ENCODE measurements at regions of chr18 and their contacts with region 1.

Region 1: DNA sequence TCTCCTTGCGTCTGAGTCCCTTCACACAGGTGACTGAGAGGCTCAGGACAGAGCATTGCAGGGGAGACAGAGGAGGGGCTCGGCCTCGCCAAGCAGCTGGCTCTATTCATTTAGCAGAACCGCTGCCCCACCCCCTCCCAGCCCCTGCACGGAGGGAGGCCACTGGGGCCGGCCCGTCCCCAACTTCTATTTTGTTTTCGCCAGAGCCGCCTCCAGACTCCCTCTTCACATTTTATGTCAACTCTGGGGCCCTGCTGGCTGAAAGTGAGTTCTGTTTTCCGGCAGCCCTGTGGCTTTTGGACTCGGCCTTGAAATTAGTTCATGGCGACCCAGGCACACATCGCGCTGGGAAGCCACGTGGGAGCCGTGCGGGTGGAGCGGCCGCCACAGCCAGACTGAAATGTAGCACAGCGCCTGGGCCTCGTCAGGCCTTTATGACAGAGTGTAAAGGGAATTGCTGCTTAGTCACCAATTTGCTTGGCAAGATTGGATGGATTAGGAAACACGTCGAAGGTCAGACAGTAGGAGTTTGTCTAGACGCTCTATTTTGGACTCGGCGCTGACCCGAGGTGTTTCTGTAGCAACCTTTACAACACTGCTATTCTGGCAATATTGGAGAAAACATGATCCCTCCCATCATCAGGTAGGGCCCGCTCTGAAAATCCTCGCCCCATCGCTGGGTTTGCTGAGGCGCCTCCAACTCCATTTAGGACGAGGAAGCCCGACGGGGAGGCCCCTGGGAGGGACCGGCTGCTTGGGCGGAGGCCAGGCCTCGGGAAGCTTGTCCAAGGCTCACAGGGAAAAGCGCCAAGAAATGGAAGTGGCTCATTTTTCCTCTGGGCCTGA is 90.7 kb upstream of the CTDP1 start:
- DNase-seq: peak; percentile 96 to 97
- ATAC-seq: peak; percentile 93
- H3K4me3 ChIP-seq: no peak overlapping the region
- H3K27ac ChIP-seq: peak overlapping the region; percentile 87 to 98
- H3K4me1 ChIP-seq: no peaks in the 10 kb centered on the region
- H3K27me3 ChIP-seq: no peaks in the 10 kb centered on the region

Region 2: DNA sequence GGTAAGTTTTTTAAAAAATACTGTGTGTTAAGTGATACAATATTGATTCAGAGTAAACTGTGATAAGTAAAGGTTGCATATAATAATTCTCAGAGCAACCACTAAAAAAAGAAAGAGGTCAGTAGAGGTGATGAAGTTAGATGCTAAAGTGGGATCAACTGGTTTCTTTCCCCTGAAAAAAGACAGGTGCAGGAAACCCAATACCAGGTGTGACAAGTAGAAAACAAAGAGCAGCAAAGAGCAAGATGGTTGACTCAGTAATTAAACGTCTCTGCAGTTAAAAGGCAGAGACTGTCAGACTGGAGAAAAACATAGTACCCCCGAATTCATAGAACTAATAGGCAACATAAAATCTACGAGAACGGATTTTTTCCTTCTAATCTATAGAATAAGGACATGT is 391.3 kb before region 1 on chr18:
- intact Hi-C with region 1: no loop called
- DNase-seq: no peak
- ATAC-seq: no peak
- H3K4me3 ChIP-seq: no peak overlapping the region
- H3K27ac ChIP-seq: no peak overlapping the region
- H3K4me1 ChIP-seq: no peaks in the 10 kb centered on the region
- H3K27me3 ChIP-seq: no peaks in the 10 kb centered on the region

Region 3: DNA sequence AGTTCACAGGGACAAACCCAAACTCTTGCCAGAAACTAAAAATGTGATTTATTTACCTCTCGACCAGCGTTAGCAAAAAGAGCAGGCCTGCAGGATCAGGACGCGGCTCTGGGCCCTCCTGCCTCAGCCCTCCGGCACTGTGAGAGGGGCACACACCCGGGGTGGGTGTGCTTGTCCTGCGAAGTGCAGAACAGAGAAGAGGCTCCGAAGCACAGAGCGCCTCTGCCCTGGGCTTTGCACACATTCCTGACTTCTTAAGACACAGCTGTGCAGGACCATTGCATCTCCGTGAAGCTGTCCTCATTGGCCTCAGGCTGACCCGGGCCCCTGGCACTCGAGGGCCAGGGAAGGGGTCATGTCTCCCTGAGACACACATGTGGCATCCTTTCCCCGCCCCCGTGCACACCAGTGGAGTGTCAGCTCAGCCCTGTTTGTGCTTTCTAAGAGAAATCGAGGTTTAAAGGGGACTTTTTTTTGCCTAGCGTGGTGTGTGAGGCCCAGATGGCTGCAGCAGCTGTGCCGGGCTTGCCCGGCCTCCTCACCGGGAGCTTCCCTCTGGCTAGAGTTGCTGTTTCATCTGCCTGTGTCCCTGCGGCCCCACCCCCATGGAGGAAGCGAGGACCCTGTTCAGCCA is 203.0 kb before region 1 on chr18:
- intact Hi-C with region 1: loop called in 1 of 2 experiments (anchors 5 kb)
- DNase-seq: no peak
- ATAC-seq: no peak
- H3K4me3 ChIP-seq: no peak overlapping the region
- H3K27ac ChIP-seq: no peak overlapping the region
- H3K4me1 ChIP-seq: no peaks in the 10 kb centered on the region
- H3K27me3 ChIP-seq: no peaks in the 10 kb centered on the region

Region 4: GRCh38 chr18:79393635-79394533 is 195.0 kb before region 1 on chr18:
- intact Hi-C with region 1: loop called (anchors 2 to 5 kb)
- DNase-seq: peak; percentile 95 to 97
- ATAC-seq: peak; percentile 80
- H3K4me3 ChIP-seq: peak overlapping the region; percentile 34 to 81
- H3K27ac ChIP-seq: peak overlapping the region; percentile 97 to 99
- H3K4me1 ChIP-seq: no peaks in the 10 kb centered on the region
- H3K27me3 ChIP-seq: no peaks in the 10 kb centered on the region

Region 5: DNA sequence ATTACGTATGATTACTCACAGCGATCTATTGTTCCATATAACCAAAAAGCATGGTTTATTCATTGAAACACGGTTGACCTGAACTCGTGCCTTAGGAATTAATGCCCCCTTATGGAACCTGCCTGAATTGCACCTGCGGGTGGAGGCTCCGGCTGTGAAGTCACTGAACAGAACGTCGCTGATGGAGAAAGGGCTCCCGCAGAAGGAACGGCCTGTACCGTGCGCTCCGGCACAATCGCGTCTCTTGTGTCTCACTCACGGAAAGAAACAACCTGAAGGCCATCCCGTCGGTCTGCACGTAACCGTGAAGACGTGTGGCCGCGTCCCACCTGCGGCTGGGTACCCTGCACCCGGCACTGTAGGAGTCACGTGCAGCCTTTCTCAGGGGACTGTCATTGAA is 60.0 kb before region 1 on chr18:
- intact Hi-C with region 1: loop called in 1 of 2 experiments (anchors 5 kb)
- DNase-seq: peak; percentile 60 to 81
- ATAC-seq: peak; percentile 44
- H3K4me3 ChIP-seq: no peak overlapping the region
- H3K27ac ChIP-seq: no peak overlapping the region
- H3K4me1 ChIP-seq: no peaks in the 10 kb centered on the region
- H3K27me3 ChIP-seq: no peaks in the 10 kb centered on the region

Region 6: DNA sequence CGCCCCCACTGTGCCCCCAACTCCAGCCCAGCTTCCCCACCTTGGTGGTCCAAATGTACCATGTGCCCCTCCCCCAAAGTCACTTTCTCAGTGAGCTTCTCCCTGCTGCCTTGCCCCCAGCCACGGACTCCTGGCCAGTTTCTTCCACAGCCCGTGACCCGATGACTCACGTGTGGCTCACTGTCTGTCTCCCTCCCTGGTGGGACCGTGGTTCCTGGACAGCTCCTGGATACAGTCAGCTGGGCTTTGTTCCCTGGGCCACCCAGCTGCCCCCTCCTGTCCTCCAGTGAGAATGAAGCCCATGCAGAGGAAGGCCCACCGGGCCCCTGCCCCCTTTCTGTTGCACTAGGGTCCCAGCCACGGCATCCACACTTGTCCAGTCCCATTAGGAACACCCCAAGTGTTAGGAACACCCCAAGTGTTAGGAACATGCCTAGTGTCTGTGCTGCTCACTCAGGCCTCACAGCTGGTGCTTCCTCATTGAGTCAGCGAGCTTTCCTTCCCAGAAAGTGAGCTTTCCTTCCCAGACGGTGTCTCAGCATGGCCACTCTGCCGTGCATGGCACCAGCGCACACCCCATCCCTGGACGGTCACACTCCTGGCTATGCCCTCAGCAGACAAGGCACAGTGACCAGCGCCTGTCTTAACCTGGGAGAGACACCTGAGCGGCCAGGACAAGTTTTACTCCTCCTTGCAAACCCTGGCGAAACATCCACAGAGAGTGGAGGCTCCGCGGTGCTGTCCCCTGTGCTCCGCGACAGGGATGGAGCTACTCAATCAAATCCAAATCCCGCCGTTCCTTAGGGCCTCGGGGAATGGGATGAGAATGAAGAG is 46.0 kb after region 1 on chr18:
- intact Hi-C with region 1: loop called (anchors 5 kb)
- DNase-seq: no peak
- ATAC-seq: no peak
- H3K4me3 ChIP-seq: no peak overlapping the region
- H3K27ac ChIP-seq: no peak overlapping the region
- H3K4me1 ChIP-seq: no peaks in the 10 kb centered on the region
- H3K27me3 ChIP-seq: no peaks in the 10 kb centered on the region

Region 7: DNA sequence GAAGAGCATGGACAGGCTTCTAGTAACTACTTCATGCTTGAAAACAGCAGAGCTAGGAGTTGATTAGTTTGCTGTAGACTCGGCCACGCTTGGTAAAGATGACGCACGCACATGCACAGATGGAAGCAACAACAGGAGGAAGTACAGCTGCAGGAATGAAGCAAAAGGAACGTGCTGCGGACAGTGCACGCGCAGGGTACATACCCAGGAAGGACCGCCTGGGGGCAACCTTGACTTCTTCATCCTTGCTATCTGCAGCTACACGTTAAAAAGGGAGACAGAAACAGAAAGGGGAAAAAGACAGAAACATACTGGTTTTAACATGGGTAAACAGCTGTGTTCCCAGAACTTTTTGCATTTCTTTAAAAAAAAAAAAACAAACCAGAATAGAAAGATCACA is 344.9 kb after region 1 on chr18:
- intact Hi-C with region 1: no loop called
- DNase-seq: peak; percentile 51 to 74
- ATAC-seq: no peak
- H3K4me3 ChIP-seq: no peak overlapping the region
- H3K27ac ChIP-seq: no peak overlapping the region
- H3K4me1 ChIP-seq: no peaks in the 10 kb centered on the region
- H3K27me3 ChIP-seq: no peaks in the 10 kb centered on the region

Measured in aorta (tissue), 5 donors.